A549 (cell line): ENCODE measurements at regions of chr18 and their contacts with region 1.

Region 1: GRCh38 chr18:49238433-49239042 is 221.9 kb downstream of the DYM start:
- DNase-seq: peak in 1 of 2 experiments; percentile 34
- ATAC-seq: no peak; a peak in 1 of 6 replicates
- H3K4me3 ChIP-seq: no peak overlapping the region
- H3K27ac ChIP-seq: no peak overlapping the region
- H3K4me1 ChIP-seq: no peaks in the 10 kb centered on the region
- CTCF ChIP-seq: peak; percentile 56
- EP300 ChIP-seq: no peak
- POLR2A ChIP-seq: no peak
- RAD21 ChIP-seq: peak; percentile 66 to 76

Region 2: GRCh38 chr18:48675352-48675761 is 563.2 kb before region 1 on chr18:
- CTCF ChIA-PET with region 1: interaction called, 11 read pairs
- POLR2A ChIA-PET with region 1: no interaction called
- DNase-seq: peak; percentile 64 to 81
- ATAC-seq: peak; percentile 95 to 97
- H3K4me3 ChIP-seq: no peak overlapping the region
- H3K27ac ChIP-seq: peak overlapping the region; percentile 38 to 63; a peak in 5 of 6 replicates
- H3K4me1 ChIP-seq: peaks cover 18% of the 10 kb centered on the region
- CTCF ChIP-seq: peak; percentile 68
- EP300 ChIP-seq: no peak
- POLR2A ChIP-seq: no peak
- RAD21 ChIP-seq: peak; percentile 85 to 87

Region 3: GRCh38 chr18:49258938-49259337 is 20.4 kb after region 1 on chr18:
- CTCF ChIA-PET with region 1: no interaction called
- POLR2A ChIA-PET with region 1: no interaction called
- DNase-seq: no peak
- ATAC-seq: no peak
- H3K4me3 ChIP-seq: no peak overlapping the region
- H3K27ac ChIP-seq: no peak overlapping the region
- H3K4me1 ChIP-seq: no peaks in the 10 kb centered on the region
- CTCF ChIP-seq: no peak
- EP300 ChIP-seq: no peak
- POLR2A ChIP-seq: no peak
- RAD21 ChIP-seq: no peak